Spleen (tissue), 13 donors: ENCODE measurements at regions of chr14 and their contacts with region 1.

Region 1: DNA sequence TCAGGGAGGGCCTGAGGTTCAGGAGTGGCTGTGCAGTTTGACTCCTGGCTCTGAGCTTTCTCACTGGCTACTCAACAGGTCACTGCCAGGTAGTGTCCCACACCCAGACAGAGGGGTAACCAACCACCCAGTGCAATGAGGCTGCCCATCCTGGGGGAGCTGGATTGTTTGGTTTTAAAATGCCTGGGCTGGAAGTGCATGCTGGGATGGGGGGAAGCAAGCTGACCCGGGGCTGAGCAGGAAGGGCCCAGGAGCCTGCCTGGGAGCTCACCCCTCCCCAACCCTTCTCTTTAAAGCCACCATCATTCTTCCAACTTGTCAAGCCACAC is 12.6 kb upstream of the ABHD12B start:
- DNase-seq: no peak
- H3K4me3 ChIP-seq: peak overlapping the region; percentile 48 to 76 (median 58)
- H3K27ac ChIP-seq: peak overlapping the region in 6 of 8 donors; percentile 60 to 87 (median 75)
- H3K4me1 ChIP-seq: peaks cover 0 to 18% (median 11%) of the 10 kb centered on the region in 6 donors
- H3K27me3 ChIP-seq: no peaks in the 10 kb centered on the region
- CTCF ChIP-seq: no peak
- POLR2A ChIP-seq: no peak

Region 2: DNA sequence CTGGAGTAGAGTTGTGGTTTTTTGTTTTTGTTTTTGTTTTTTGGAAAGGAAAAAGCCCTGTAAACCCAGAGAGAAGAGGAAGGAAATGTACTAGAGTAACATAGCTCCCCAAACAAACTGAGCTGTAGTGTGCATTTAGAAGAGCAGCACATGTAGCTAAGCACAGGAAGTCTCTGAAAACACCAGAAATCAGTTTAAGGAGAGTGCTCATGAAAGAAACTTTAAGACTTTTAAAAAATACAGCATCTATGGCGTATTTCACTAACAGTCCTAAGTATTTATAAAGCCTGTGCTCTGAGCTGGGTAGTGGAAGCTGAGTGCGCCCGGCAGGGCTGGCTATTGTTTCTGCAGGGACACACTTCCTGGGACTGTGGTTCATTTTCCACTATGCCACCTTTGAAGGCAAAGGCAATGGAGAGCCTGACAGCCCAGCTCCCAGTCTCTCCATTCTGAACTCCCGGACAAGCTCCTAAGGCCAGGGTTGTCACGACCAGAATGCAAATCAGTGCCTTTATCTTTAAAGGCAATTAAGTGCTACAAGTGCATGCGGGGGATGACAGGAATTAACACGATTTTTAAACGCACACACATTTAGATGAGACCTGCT is 73.7 kb before region 1 on chr14:
- intact Hi-C with region 1: loop called (anchors 10 kb)
- DNase-seq: no peak
- H3K4me3 ChIP-seq: peak overlapping the region in 1 of 8 donors; percentile 33
- H3K27ac ChIP-seq: peak overlapping the region; percentile 28 to 85 (median 62)
- H3K4me1 ChIP-seq: peaks cover 21 to 85% (median 54%) of the 10 kb centered on the region in 6 donors
- H3K27me3 ChIP-seq: no peaks in the 10 kb centered on the region
- CTCF ChIP-seq: no peak
- POLR2A ChIP-seq: no peak